Activated T-helper 2 cell treated with anti-CD3 and anti-CD28 coated beads, Interferon-gamma antibody, Interleukin-2, Interleukin-4, amounts not matched to agents 10 μg/mL and 5 μg/mL and 100 μg/mL, durations not matched to agents 14 hours and 24 hours and 36 hours (primary cell): ENCODE measurements at regions of chr21 and their contacts with region 1.

Region 1: GRCh38 chr21:26425576-26425975 is 147.5 kb downstream of the CYYR1 start:
- DNase-seq: no peak
- H3K4me3 Mint-ChIP-seq: no peak overlapping the region
- H3K27ac Mint-ChIP-seq: no peak overlapping the region
- H3K4me1 Mint-ChIP-seq: peaks cover 7% of the 10 kb centered on the region
- H3K27me3 Mint-ChIP-seq: no peaks in the 10 kb centered on the region

Region 2: GRCh38 chr21:26351661-26352060 is 73.9 kb before region 1 on chr21:
- intact Hi-C with region 1: no loop called
- DNase-seq: no peak
- H3K4me3 Mint-ChIP-seq: no peak overlapping the region
- H3K27ac Mint-ChIP-seq: no peak overlapping the region
- H3K4me1 Mint-ChIP-seq: no peaks in the 10 kb centered on the region
- H3K27me3 Mint-ChIP-seq: no peaks in the 10 kb centered on the region

Region 3: GRCh38 chr21:26366781-26367180 is 58.8 kb before region 1 on chr21:
- intact Hi-C with region 1: no loop called
- DNase-seq: no peak
- H3K4me3 Mint-ChIP-seq: no peak overlapping the region
- H3K27ac Mint-ChIP-seq: no peak overlapping the region
- H3K4me1 Mint-ChIP-seq: no peaks in the 10 kb centered on the region
- H3K27me3 Mint-ChIP-seq: no peaks in the 10 kb centered on the region

Region 4: DNA sequence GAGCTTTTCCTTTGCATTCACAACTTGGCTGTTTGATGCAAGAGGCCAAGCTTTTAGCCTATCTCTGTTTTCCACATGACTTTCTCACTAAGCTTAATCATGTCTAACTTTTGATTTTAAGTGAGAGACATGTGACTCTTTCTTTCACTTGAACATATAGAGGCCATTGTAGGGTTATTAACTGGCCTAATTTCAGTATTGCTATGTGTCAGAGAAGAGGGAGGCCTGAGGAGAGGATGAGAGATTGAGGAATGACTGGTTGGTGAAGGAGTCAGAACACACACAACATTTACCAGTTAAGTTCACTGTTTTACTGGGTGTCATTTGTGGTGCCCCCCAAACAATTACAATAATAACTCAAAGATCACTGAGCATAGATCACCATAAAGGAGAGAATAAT is 46.0 kb before region 1 on chr21:
- intact Hi-C with region 1: loop called (anchors 1 kb)
- DNase-seq: no peak
- H3K4me3 Mint-ChIP-seq: no peak overlapping the region
- H3K27ac Mint-ChIP-seq: no peak overlapping the region
- H3K4me1 Mint-ChIP-seq: no peaks in the 10 kb centered on the region
- H3K27me3 Mint-ChIP-seq: no peaks in the 10 kb centered on the region

Region 5: GRCh38 chr21:26461500-26461899 is 35.9 kb after region 1 on chr21:
- intact Hi-C with region 1: no loop called
- DNase-seq: no peak
- H3K4me3 Mint-ChIP-seq: no peak overlapping the region
- H3K27ac Mint-ChIP-seq: no peak overlapping the region
- H3K4me1 Mint-ChIP-seq: no peaks in the 10 kb centered on the region
- H3K27me3 Mint-ChIP-seq: no peaks in the 10 kb centered on the region

Region 6: GRCh38 chr21:26572702-26573381 is 147.3 kb after region 1 on chr21 and contains the start of gene CYYR1:
- intact Hi-C with region 1: no loop called
- DNase-seq: no peak
- H3K4me3 Mint-ChIP-seq: peak within 1 kb of the TSS; percentile 56
- H3K27ac Mint-ChIP-seq: no peak within 1 kb of the TSS
- H3K4me1 Mint-ChIP-seq: peaks cover 2% of the 10 kb centered on the region
- H3K27me3 Mint-ChIP-seq: peaks cover 20% of the 10 kb centered on the region
- total RNA-seq, gene CYYR1: 0.07 and 0.21 TPM in 2 replicates